Activated T-helper 1 cell treated with anti-CD3 and anti-CD28 coated beads, Interleukin-12 subunit alpha, Interleukin-12 subunit beta, Interleukin-2, Interleukin-4 antibody, amounts not matched to agents 30 ng/mL and 10 ng/mL and 1 ng/mL, durations not matched to agents 14 hours and 24 hours and 36 hours (primary cell): ENCODE measurements at regions of chr4 and their contacts with region 1.

Region 1: DNA sequence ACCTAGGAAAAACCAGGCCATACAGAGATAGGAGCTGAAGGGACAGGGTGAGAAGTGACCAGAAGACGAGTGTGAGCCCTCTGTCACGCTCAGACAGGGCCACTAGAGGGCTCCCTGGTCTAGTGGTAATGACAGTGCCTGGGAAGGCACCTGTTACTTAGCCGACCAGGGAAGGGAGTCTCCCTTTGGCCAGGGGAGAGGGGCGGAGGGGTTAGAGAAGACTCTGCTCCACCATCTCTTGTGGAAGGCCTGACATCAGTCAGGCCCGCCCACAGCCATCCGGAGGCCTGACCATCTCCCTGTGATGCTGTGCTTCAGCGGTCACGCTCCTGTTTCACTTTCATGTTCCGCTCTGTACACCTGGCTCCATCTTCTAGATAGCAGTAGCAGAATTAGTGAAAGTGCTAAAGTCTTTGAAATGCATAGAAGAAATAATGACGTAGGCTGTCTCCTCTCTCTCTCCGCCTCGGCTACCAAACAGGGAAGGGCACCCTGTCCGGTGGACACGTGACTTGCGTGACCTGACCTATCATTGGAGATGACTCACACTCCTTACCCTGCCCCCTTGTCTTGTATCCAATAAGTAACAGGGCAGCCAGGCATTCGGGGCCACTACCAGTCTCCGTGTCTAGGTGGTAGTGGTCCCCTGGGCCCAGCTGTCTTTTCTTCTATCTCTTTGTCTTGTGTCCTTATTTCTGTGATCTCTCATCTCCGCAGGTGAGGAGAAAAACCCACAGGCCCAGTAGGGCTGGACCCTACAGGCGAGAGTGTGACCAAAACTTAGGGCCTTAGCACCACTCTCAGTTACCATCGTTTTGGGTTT is 26.7 kb downstream of the HTT-AS start:
- DNase-seq: peak; percentile 80
- H3K4me3 Mint-ChIP-seq: peak overlapping the region; percentile 49
- H3K27ac Mint-ChIP-seq: peak overlapping the region; percentile 48
- H3K4me1 Mint-ChIP-seq: peaks cover 38% of the 10 kb centered on the region
- H3K27me3 Mint-ChIP-seq: peaks cover 26% of the 10 kb centered on the region

Region 2: DNA sequence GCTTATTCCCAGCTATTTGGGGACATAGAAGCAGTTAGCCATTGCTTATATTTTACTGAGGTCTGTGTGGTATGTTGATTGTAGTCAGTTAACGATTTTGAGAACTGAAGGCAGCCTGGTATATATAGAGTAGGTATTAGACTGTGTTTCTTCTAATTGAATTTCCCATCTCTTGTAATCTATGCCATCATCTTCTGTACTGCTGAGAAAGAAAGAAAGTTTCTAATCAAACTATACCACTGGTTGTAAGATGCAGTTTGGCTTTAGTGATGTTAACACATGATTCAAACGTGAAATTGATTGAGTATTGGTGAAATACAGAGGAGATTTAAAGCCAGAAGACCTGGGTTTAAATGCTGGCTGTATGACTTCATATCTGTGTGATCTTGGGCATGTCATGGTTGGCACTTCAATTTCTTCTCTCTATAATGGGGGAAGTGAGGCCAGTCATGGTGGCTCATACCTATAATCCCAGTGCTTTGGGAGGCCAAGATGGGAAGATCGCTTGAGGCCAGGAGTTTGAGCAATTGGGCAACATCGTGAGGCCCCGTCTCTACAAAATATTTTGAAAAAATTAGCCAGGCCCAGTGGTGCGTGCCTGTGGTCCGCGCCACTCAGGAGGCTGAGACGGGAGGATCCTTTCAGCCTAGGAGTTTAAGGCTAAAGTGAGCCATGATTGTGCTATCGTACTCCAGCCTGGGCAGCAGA is 38.4 kb after region 1 on chr4:
- intact Hi-C with region 1: loop called (anchors 1 kb)
- DNase-seq: no peak
- H3K4me3 Mint-ChIP-seq: no peak overlapping the region
- H3K27ac Mint-ChIP-seq: peak overlapping the region; percentile 80
- H3K4me1 Mint-ChIP-seq: peaks cover 58% of the 10 kb centered on the region
- H3K27me3 Mint-ChIP-seq: no peaks in the 10 kb centered on the region

Region 3: GRCh38 chr4:3201718-3202702 is 154.3 kb after region 1 on chr4:
- intact Hi-C with region 1: loop called (anchors 1 kb)
- DNase-seq: peak; percentile 74
- H3K4me3 Mint-ChIP-seq: peak overlapping the region; percentile 70
- H3K27ac Mint-ChIP-seq: peak overlapping the region; percentile 94
- H3K4me1 Mint-ChIP-seq: peaks cover 31% of the 10 kb centered on the region
- H3K27me3 Mint-ChIP-seq: no peaks in the 10 kb centered on the region

Region 4: GRCh38 chr4:3292571-3293400 is 245.1 kb after region 1 on chr4 and contains the start of gene RGS12:
- intact Hi-C with region 1: loop called (anchors 1 kb)
- DNase-seq: peak; percentile 80
- H3K4me3 Mint-ChIP-seq: peak within 1 kb of the TSS; percentile 83
- H3K27ac Mint-ChIP-seq: peak within 1 kb of the TSS; percentile 72
- H3K4me1 Mint-ChIP-seq: peaks cover 6% of the 10 kb centered on the region
- H3K27me3 Mint-ChIP-seq: peaks cover 50% of the 10 kb centered on the region
- total RNA-seq, gene RGS12: 3.1 and 3.6 TPM in 2 replicates

Region 5: GRCh38 chr4:4480685-4481398 is 1433.2 kb after region 1 on chr4:
- intact Hi-C with region 1: no loop called
- DNase-seq: no peak
- H3K4me3 Mint-ChIP-seq: no peak overlapping the region
- H3K27ac Mint-ChIP-seq: no peak overlapping the region
- H3K4me1 Mint-ChIP-seq: no peaks in the 10 kb centered on the region
- H3K27me3 Mint-ChIP-seq: no peaks in the 10 kb centered on the region